SK-N-SH (cell line): ENCODE measurements at regions of chr2 and their contacts with region 1.

Region 1: GRCh38 chr2:28566521-28567041 is 70.7 kb downstream of the PLB1 start:
- DNase-seq: peak; percentile 98
- H3K4me3 ChIP-seq: peak overlapping the region; percentile 62
- H3K27ac ChIP-seq: peak overlapping the region; percentile 36 to 71; a peak in 3 of 4 replicates
- H3K4me1 ChIP-seq: peaks cover 0 to 7% of the 10 kb centered on the region in 2 experiments; a peak in 1 of 4 replicates
- H3K27me3 ChIP-seq: no peaks in the 10 kb centered on the region
- CTCF ChIP-seq: peak; percentile 99
- EP300 ChIP-seq: no peak
- RAD21 ChIP-seq: peak; percentile 85

Region 2: GRCh38 chr2:28398101-28398834 is 168.3 kb before region 1 on chr2:
- CTCF ChIA-PET with region 1: interaction called, 13 read pairs
- POLR2A ChIA-PET with region 1: no interaction called
- DNase-seq: no peak
- H3K4me3 ChIP-seq: peak overlapping the region in 1 of 2 experiments; percentile 84; a peak in 1 of 4 replicates
- H3K27ac ChIP-seq: peak overlapping the region in 1 of 2 experiments; percentile 97; a peak in 1 of 4 replicates
- H3K4me1 ChIP-seq: peaks cover 9 to 30% of the 10 kb centered on the region in 2 experiments
- H3K27me3 ChIP-seq: no peaks in the 10 kb centered on the region
- CTCF ChIP-seq: no peak
- EP300 ChIP-seq: no peak
- RAD21 ChIP-seq: no peak

Region 3: GRCh38 chr2:28544919-28545589 is 21.5 kb before region 1 on chr2:
- CTCF ChIA-PET with region 1: interaction called, 19 read pairs
- POLR2A ChIA-PET with region 1: interaction called, 6 read pairs
- DNase-seq: no peak
- H3K4me3 ChIP-seq: no peak overlapping the region
- H3K27ac ChIP-seq: no peak overlapping the region
- H3K4me1 ChIP-seq: peaks cover 0 to 13% of the 10 kb centered on the region in 2 experiments; a peak in 1 of 4 replicates
- H3K27me3 ChIP-seq: peaks cover 9% of the 10 kb centered on the region; the same call in 1 of the 2 replicates
- CTCF ChIP-seq: no peak
- EP300 ChIP-seq: no peak
- RAD21 ChIP-seq: no peak

Region 4: GRCh38 chr2:28583899-28584553 is 17.4 kb after region 1 on chr2:
- CTCF ChIA-PET with region 1: interaction called, 59 read pairs
- POLR2A ChIA-PET with region 1: no interaction called
- DNase-seq: no peak
- H3K4me3 ChIP-seq: peak overlapping the region in 1 of 2 experiments; percentile 21; a peak in 2 of 4 replicates
- H3K27ac ChIP-seq: peak overlapping the region in 1 of 2 experiments; percentile 97; a peak in 2 of 4 replicates
- H3K4me1 ChIP-seq: peaks cover 0 to 19% of the 10 kb centered on the region in 2 experiments; a peak in 3 of 4 replicates
- H3K27me3 ChIP-seq: no peaks in the 10 kb centered on the region
- CTCF ChIP-seq: no peak
- EP300 ChIP-seq: peak in 1 of 2 experiments; percentile 91; a peak in 2 of 4 replicates
- RAD21 ChIP-seq: no peak

Region 5: GRCh38 chr2:28661589-28662001 is 95.0 kb after region 1 on chr2:
- CTCF ChIA-PET with region 1: interaction called, 13 read pairs
- POLR2A ChIA-PET with region 1: interaction called, 3 read pairs
- DNase-seq: peak; percentile 63
- H3K4me3 ChIP-seq: no peak overlapping the region
- H3K27ac ChIP-seq: peak overlapping the region; percentile 68 to 98
- H3K4me1 ChIP-seq: peaks cover 43 to 50% of the 10 kb centered on the region in 2 experiments
- H3K27me3 ChIP-seq: no peaks in the 10 kb centered on the region
- CTCF ChIP-seq: no peak
- EP300 ChIP-seq: peak in 1 of 2 experiments; percentile 61; a peak in 2 of 4 replicates
- RAD21 ChIP-seq: peak; percentile 41

Region 6: GRCh38 chr2:28810384-28811285 is 244.1 kb after region 1 on chr2 and contains the start of gene SPDYA:
- CTCF ChIA-PET with region 1: interaction called, 15 read pairs
- POLR2A ChIA-PET with region 1: no interaction called
- DNase-seq: peak; percentile 99
- H3K4me3 ChIP-seq: peak within 1 kb of the TSS; percentile 56 to 57; a peak in 3 of 4 replicates
- H3K27ac ChIP-seq: peak within 1 kb of the TSS in 1 of 2 experiments; percentile 43; a peak in 1 of 4 replicates
- H3K4me1 ChIP-seq: peaks cover 0 to 5% of the 10 kb centered on the region in 2 experiments; a peak in 1 of 4 replicates
- H3K27me3 ChIP-seq: no peaks in the 10 kb centered on the region
- CTCF ChIP-seq: no peak
- EP300 ChIP-seq: no peak
- RAD21 ChIP-seq: no peak
- polyA plus RNA-seq, gene SPDYA: 0.10 TPM in 1 of 2 replicates, not detected in the other

Region 7: DNA sequence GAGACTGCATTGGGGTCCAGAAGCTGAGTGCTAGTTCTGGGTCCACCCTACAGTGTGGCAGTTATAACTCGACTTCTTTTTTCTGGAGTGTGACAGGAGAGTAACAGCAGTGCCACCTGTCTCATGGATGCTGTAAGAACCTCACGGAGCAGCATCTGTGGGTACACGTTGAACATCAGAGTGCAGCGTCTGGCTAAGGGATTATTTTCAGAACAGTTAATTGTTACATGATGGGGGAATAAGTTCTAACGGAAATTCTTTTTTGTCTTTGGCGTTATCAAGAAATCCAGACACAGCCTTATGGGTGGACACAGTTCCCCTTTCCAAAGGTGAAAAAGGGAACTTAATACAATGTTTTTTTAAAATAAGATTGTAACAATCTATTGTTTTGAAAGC is 386.2 kb after region 1 on chr2:
- CTCF ChIA-PET with region 1: interaction called, 12 read pairs
- POLR2A ChIA-PET with region 1: no interaction called
- DNase-seq: peak; percentile 51
- H3K4me3 ChIP-seq: no peak overlapping the region
- H3K27ac ChIP-seq: no peak overlapping the region
- H3K4me1 ChIP-seq: peaks cover 0 to 9% of the 10 kb centered on the region in 2 experiments; a peak in 2 of 4 replicates
- H3K27me3 ChIP-seq: no peaks in the 10 kb centered on the region
- CTCF ChIP-seq: no peak
- EP300 ChIP-seq: no peak
- RAD21 ChIP-seq: peak; percentile 58